ENCODE measurements at regions of chr4 and their contacts with region 1.

Region 1: GRCh38 chr4:184649026-184649970 is at the starts of genes CASP3 and PRIMPOL:
- DNase-seq: peak; percentile 89
- ATAC-seq: peak; percentile 82
- H3K4me3 ChIP-seq: peak within 1 kb of the TSS; percentile 93
- H3K27ac ChIP-seq: peak within 1 kb of the TSS; percentile 57
- H3K4me1 ChIP-seq: peaks cover 21% of the 10 kb centered on the region
- H3K27me3 ChIP-seq: no peaks in the 10 kb centered on the region
- CTCF ChIP-seq: 0 out of 2 replicates have a peak, but pooled peaks have one; percentile 7
- total RNA-seq, gene CASP3: 11.1 and 13.2 TPM in 2 replicates
- total RNA-seq, gene PRIMPOL: 9.3 and 9.4 TPM in 2 replicates

Region 2: GRCh38 chr4:184688447-184688846 is 39.1 kb after region 1 on chr4:
- CTCF ChIA-PET with region 1: no interaction called
- POLR2A ChIA-PET with region 1: no interaction called
- intact Hi-C with region 1: loop called (anchors 1 kb)
- DNase-seq: peak; percentile 90
- ATAC-seq: peak; percentile 99
- H3K4me3 ChIP-seq: no peak overlapping the region
- H3K27ac ChIP-seq: peak overlapping the region; percentile 81
- H3K4me1 ChIP-seq: peaks cover 15% of the 10 kb centered on the region
- H3K27me3 ChIP-seq: no peaks in the 10 kb centered on the region
- CTCF ChIP-seq: no peak

Region 3: DNA sequence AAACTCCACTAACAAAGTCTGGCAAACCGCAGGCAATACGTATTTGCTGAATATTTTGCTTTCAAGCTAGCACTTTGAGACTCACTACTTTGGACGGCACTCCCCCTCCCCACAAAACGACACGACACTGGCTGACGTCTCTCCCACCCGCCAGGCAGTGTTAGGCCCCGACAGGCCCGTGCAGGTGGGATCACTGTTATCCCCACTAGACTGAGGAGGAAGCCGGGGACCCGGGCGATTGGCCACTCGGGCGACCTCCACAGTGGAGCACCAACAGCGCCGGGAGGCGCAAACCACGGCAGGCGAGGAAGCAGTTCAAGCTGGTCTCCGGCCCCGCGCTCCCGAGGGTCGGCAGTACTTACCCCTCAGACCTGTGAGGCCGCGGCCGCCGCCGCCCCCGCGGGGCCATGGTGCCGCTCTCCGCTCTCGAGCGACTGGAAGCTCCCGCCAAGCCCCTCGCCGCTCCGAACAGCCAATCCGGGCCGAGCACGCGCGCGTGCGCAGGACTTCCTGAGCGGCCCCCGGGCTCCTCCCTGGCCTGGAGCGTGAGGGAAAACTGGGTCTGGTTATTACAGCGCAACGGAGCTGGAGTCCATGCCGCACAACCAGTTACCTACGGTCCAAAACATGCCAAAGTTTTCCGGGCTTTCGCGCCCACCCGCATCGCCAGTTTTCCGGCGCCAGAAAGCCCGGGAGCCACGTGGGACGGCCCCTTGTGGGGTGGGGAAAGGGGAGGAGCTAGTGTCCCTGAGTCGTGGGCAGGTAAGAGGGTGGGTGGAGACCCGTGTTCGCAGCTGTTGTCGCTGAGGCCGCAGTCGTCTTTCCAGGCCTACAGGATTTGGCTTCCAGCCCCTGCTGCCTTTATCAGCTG is 84.6 kb after region 1 on chr4 and contains the start of gene CENPU:
- CTCF ChIA-PET with region 1: no interaction called
- POLR2A ChIA-PET with region 1: interaction called, 3 read pairs
- intact Hi-C with region 1: loop called (anchors 1 kb)
- DNase-seq: peak; percentile 96
- ATAC-seq: peak; percentile 82
- H3K4me3 ChIP-seq: peak within 1 kb of the TSS; percentile 95
- H3K27ac ChIP-seq: peak within 1 kb of the TSS; percentile 71
- H3K4me1 ChIP-seq: peaks cover 16% of the 10 kb centered on the region
- H3K27me3 ChIP-seq: no peaks in the 10 kb centered on the region
- CTCF ChIP-seq: no peak
- total RNA-seq, gene CENPU: 27.6 and 38.2 TPM in 2 replicates

Measured in PC-3 (cell line).